ENCODE measurements at regions of chr7 and their contacts with region 1.

Region 1: GRCh38 chr7:29921404-29922010 is 68.1 kb downstream of the SCRN1 start:
- DNase-seq: peak; percentile 45
- H3K4me3 ChIP-seq: no peak overlapping the region
- H3K27ac ChIP-seq: no peak overlapping the region
- H3K4me1 ChIP-seq: no peaks in the 10 kb centered on the region
- H3K27me3 ChIP-seq: no peaks in the 10 kb centered on the region
- CTCF ChIP-seq: peak; percentile 90 to 94

Region 2: DNA sequence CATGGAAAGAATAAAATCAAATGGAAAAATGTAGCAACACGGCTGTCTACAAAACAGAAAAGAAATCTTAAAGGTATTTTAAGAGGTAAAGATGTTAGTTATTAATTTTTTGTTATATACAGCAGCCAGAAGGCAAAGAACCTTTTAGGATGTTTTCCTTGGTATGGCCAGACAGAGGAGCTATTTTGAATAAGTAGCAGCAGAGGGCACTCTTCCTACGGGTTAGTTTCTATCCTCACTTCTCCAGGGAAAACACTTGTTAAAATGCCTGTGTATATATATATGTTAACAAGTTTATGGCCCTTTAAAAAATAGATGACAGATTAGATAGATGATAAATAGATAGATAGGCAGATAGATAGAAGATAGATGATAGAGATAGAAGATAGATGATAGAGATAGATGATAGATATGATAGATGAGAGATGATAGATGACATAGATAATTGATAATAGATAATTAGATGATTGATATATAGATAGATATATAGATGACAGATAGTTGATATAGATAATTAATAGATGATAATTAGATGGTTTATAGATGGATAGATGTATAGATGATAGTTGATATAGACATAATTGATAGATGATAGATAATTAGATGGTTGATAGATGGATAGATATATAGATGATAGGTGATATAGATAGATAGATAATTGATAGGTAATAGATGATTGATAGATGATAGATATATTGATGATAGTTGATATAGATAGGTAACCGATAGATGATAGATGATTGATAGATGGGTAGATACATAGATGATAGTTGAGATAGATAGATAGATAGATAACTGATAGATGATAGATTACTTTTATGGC is 173.0 kb before region 1 on chr7:
- CTCF ChIA-PET with region 1: interaction called, 3 read pairs
- dilution Hi-C with region 1: no loop called
- in situ Hi-C with region 1: no loop called
- intact Hi-C with region 1: loop called (anchors 1 kb)
- DNase-seq: peak; percentile 15
- H3K4me3 ChIP-seq: no peak overlapping the region
- H3K27ac ChIP-seq: no peak overlapping the region
- H3K4me1 ChIP-seq: no peaks in the 10 kb centered on the region
- H3K27me3 ChIP-seq: peaks cover 5% of the 10 kb centered on the region
- CTCF ChIP-seq: peak; percentile 23 to 64

Region 3: GRCh38 chr7:29884399-29885272 is 36.9 kb before region 1 on chr7:
- CTCF ChIA-PET with region 1: no interaction called
- dilution Hi-C with region 1: no loop called
- in situ Hi-C with region 1: no loop called
- intact Hi-C with region 1: no loop called
- DNase-seq: no peak
- H3K4me3 ChIP-seq: peak overlapping the region in 1 of 3 experiments; percentile 38
- H3K27ac ChIP-seq: no peak overlapping the region
- H3K4me1 ChIP-seq: no peaks in the 10 kb centered on the region
- H3K27me3 ChIP-seq: no peaks in the 10 kb centered on the region
- CTCF ChIP-seq: no peak

Region 4: DNA sequence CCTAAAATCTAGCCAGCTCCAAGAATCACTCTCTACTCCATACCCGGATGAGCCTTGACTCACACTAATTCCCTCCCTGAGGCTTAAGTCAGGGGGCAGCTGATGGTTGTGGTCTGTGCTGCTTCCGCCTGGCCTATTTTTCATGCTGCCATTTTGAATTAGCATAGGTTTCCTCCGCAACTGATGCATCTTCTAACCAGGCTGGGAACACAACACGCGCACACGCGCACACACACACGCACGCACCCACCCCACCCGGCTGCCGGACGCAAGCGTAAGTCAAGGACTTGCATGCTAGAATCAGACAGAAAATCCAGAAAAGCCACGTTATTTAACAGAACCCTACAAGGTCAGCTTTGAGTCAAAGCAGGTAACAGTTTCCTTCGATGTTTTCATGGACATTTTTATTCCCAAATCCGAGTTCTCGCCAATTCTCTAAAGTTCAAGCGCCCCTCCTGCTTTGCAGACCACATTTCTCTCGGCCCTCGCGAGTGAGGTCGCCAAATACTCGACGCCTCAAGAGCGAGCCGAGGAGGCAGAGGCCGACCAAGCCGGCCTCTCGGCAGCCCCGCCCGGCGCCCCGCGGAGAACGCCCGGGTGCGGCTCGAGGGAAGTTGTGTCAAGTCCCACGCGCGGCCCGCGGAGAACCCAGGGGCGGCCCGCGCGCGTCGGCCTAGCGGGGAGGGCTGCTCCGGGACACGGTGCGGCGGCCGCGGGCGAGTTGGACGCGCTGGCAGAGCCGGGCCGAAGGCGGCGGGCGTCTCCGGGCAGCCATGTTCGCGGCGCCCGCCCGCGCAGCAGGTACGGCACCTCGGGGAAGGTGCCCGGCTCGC is 67.1 kb after region 1 on chr7:
- CTCF ChIA-PET with region 1: no interaction called
- dilution Hi-C with region 1: no loop called
- in situ Hi-C with region 1: no loop called
- intact Hi-C with region 1: no loop called
- DNase-seq: peak; percentile 63
- H3K4me3 ChIP-seq: peak overlapping the region; percentile 87 to 99 (median 97)
- H3K27ac ChIP-seq: peak overlapping the region; percentile 57
- H3K4me1 ChIP-seq: peaks cover 21% of the 10 kb centered on the region
- H3K27me3 ChIP-seq: no peaks in the 10 kb centered on the region
- CTCF ChIP-seq: no peak

Measured in mammary epithelial cell (primary cell).